ENCODE measurements at regions of chr6 and their contacts with region 1.

Region 1: DNA sequence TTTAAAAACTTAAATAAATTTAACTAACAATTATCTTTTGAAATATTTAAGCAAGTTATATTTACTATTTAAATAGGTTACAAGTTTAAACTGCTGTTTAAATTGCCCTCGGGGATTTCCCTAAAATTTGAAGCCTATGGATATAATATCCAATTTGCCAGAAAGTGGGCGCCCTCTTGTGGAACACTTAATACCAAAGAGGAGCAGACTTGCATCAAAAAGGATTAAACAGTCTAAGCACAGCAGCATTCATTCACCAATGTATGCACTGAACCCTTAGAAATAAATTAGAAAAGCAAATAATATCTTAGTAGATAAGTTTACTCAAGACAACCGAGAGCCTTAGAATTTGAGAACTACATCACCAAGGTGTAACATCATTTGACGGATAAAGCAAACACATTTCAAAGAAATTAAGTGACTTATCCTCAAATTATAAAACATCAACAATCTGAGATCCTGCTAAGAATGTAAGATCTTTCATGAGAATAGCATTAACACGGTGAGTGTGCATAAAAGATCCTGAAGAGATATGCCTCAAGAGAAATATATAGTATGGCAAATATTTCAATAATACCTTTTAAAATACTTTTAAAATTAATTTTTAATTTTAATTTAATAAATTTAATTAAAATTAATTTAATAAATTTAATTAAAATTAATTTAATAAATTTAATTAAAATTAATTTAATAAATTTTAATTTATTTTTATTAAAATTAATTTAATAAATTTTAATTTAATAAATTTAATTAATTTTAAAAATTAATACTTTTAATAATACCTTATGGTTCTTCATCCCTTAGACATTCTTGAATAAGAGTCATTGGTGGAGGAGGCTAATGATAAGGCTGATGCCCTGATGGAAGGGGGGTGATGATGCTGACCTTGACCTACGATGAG is 11.5 kb upstream of the MEP1A start:
- DNase-seq: peak; percentile 36
- ATAC-seq: peak in 1 of 2 donors; percentile 60

Region 2: DNA sequence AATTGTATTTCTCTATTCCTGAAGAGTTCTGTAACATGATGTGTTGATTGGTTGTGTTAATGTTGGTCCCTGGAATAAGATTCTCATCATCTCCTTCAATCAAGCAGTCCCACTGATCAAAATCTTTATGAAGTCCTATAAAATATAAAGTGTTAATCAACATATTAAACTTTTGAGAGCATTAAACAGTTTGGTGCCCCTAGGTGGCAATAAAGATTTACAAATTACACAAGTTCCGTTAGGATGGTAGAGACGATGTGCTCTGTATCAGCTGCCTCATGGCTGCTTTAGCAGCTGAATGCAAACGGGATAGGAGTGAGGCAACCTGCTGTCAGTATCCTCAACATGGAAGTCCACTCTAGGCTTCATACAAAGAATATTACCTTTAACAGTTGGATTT is 77.2 kb before region 1 on chr6:
- intact Hi-C with region 1: loop called (anchors 5 to 10 kb)
- DNase-seq: no peak
- ATAC-seq: peak in 1 of 2 donors; percentile 66

Region 3: DNA sequence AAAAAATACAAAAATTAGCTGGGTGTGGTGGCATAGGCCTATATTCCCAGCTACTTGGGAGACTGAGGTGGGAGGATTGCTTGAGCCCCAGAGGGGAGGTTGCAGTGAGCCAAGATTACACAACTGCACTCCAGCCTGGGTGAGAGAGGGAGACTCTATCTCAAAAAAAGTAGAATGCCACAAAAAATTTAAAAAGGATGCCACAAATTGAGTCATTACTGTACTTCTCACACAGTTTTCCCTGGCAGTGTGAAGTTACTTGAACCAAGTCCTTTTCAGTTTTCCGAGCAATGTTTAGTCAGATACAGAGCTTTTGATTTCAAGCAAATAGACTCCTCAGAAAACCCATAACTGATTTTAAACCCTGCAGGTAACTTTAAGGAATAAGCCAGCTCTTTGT is 474.6 kb after region 1 on chr6:
- intact Hi-C with region 1: no loop called
- DNase-seq: no peak
- ATAC-seq: no peak